Panc1 (cell line): ENCODE measurements at regions of chr6 and their contacts with region 1.

Region 1: DNA sequence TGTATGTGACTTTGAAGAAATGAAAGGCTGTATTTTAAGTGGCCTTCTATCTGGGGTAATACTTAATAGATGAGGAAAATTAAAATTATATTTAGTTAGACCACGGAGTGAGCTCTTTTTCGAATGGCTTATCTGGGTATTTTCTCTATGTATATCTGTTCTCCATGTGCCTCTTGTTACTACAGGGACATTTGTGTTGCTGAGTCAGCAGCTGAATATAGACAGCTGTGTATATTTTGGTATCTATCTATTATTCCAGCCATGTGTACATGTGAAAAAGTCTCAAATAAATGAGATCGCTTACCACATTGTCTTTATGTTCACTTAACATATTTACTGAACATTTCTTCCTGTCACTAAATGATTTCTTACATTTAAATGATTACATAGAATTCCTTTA is 57.2 kb downstream of the TMEM200A start:
- DNase-seq: no peak
- ATAC-seq: no peak
- H3K4me3 ChIP-seq: no peak overlapping the region
- H3K27ac ChIP-seq: no peak overlapping the region
- H3K4me1 ChIP-seq: no peaks in the 10 kb centered on the region
- H3K27me3 ChIP-seq: no peaks in the 10 kb centered on the region
- CTCF ChIP-seq: no peak

Region 2: DNA sequence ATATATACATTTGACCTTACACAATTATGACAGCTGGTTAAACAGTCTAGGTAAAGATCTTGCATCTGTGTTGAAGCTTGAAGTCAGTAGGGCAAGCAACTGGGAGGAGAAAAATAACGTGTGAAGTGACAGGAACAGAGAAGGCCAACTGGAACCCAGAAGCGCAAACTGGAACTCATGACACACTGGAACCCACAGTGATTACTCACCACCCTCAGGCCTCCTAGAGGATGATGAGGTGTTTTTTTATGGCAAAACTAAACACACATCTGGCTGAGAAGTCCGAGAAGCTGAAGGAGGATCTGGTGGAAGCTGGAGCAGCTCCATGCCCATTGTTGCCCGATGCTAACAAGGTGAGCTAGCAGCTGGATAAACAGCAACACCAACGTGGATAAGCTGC is 50.8 kb after region 1 on chr6:
- CTCF ChIA-PET with region 1: no interaction called
- POLR2A ChIA-PET with region 1: no interaction called
- in situ Hi-C with region 1: no loop called
- intact Hi-C with region 1: no loop called
- DNase-seq: no peak
- ATAC-seq: no peak
- H3K4me3 ChIP-seq: no peak overlapping the region
- H3K27ac ChIP-seq: no peak overlapping the region
- H3K4me1 ChIP-seq: no peaks in the 10 kb centered on the region
- H3K27me3 ChIP-seq: no peaks in the 10 kb centered on the region
- CTCF ChIP-seq: no peak

Region 3: GRCh38 chr6:130494729-130495128 is 71.7 kb after region 1 on chr6:
- CTCF ChIA-PET with region 1: no interaction called
- POLR2A ChIA-PET with region 1: no interaction called
- in situ Hi-C with region 1: no loop called
- intact Hi-C with region 1: no loop called
- DNase-seq: no peak
- ATAC-seq: no peak
- H3K4me3 ChIP-seq: no peak overlapping the region
- H3K27ac ChIP-seq: no peak overlapping the region
- H3K4me1 ChIP-seq: no peaks in the 10 kb centered on the region
- H3K27me3 ChIP-seq: no peaks in the 10 kb centered on the region
- CTCF ChIP-seq: no peak

Region 4: GRCh38 chr6:131139599-131139998 is 716.6 kb after region 1 on chr6:
- CTCF ChIA-PET with region 1: interaction called, 14 read pairs
- POLR2A ChIA-PET with region 1: no interaction called
- in situ Hi-C with region 1: no loop called
- intact Hi-C with region 1: no loop called
- DNase-seq: no peak
- ATAC-seq: no peak
- H3K4me3 ChIP-seq: no peak overlapping the region
- H3K27ac ChIP-seq: no peak overlapping the region; the same call in 1 of the 2 replicates
- H3K4me1 ChIP-seq: peaks cover 14% of the 10 kb centered on the region
- H3K27me3 ChIP-seq: no peaks in the 10 kb centered on the region
- CTCF ChIP-seq: no peak